HepG2 (cell line): ENCODE measurements at regions of chr3 and their contacts with region 1.

Region 1: DNA sequence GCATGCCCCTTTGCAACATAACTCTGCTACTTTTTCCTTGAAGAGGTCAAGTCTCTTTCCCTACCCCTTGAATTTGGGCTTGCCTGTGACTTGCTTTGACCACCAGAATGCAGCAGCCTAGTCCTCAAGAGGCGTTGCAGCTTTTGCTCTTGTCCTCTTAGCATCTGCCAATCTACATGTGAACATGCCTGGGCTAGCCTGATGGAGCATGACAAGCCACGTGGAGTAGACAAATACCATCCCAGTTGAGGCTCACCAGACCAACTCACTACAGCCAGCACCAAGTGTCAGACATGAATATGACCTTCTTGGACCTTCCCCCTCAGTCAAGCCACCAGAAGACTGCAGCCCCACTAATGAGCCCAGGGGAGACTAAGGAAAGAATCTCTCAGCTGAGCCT is 32.9 kb downstream of the AMOTL2 start:
- DNase-seq: no peak
- ATAC-seq: no peak
- H3K4me3 ChIP-seq: no peak overlapping the region
- H3K27ac ChIP-seq: no peak overlapping the region
- H3K4me1 ChIP-seq: peaks cover 56% of the 10 kb centered on the region
- H3K27me3 ChIP-seq: no peaks in the 10 kb centered on the region
- CTCF ChIP-seq: no peak
- EP300 ChIP-seq: no peak
- POLR2A ChIP-seq: no peak
- RAD21 ChIP-seq: no peak

Region 2: GRCh38 chr3:132843851-132844553 is 1497.4 kb before region 1 on chr3:
- CTCF ChIA-PET with region 1: no interaction called
- POLR2A ChIA-PET with region 1: no interaction called
- in situ Hi-C with region 1: no loop called
- intact Hi-C with region 1: no loop called
- DNase-seq: no peak
- ATAC-seq: no peak
- H3K4me3 ChIP-seq: no peak overlapping the region
- H3K27ac ChIP-seq: no peak overlapping the region
- H3K4me1 ChIP-seq: no peaks in the 10 kb centered on the region
- H3K27me3 ChIP-seq: no peaks in the 10 kb centered on the region
- CTCF ChIP-seq: no peak
- EP300 ChIP-seq: no peak
- POLR2A ChIP-seq: no peak
- RAD21 ChIP-seq: no peak

Region 3: GRCh38 chr3:134326760-134327593 is 14.4 kb before region 1 on chr3:
- CTCF ChIA-PET with region 1: no interaction called
- POLR2A ChIA-PET with region 1: no interaction called
- in situ Hi-C with region 1: no loop called
- intact Hi-C with region 1: loop called (anchors 2 kb)
- DNase-seq: peak; percentile 90
- ATAC-seq: peak; percentile 95
- H3K4me3 ChIP-seq: no peak overlapping the region
- H3K27ac ChIP-seq: no peak overlapping the region
- H3K4me1 ChIP-seq: peaks cover 77% of the 10 kb centered on the region
- H3K27me3 ChIP-seq: no peaks in the 10 kb centered on the region
- CTCF ChIP-seq: no peak
- EP300 ChIP-seq: peak in 1 of 2 experiments; percentile 77; a peak in 1 of 4 replicates
- POLR2A ChIP-seq: no peak
- RAD21 ChIP-seq: no peak